Right cardiac atrium (tissue), 5 donors: ENCODE measurements at regions of chr10 and their contacts with region 1.

Region 1: DNA sequence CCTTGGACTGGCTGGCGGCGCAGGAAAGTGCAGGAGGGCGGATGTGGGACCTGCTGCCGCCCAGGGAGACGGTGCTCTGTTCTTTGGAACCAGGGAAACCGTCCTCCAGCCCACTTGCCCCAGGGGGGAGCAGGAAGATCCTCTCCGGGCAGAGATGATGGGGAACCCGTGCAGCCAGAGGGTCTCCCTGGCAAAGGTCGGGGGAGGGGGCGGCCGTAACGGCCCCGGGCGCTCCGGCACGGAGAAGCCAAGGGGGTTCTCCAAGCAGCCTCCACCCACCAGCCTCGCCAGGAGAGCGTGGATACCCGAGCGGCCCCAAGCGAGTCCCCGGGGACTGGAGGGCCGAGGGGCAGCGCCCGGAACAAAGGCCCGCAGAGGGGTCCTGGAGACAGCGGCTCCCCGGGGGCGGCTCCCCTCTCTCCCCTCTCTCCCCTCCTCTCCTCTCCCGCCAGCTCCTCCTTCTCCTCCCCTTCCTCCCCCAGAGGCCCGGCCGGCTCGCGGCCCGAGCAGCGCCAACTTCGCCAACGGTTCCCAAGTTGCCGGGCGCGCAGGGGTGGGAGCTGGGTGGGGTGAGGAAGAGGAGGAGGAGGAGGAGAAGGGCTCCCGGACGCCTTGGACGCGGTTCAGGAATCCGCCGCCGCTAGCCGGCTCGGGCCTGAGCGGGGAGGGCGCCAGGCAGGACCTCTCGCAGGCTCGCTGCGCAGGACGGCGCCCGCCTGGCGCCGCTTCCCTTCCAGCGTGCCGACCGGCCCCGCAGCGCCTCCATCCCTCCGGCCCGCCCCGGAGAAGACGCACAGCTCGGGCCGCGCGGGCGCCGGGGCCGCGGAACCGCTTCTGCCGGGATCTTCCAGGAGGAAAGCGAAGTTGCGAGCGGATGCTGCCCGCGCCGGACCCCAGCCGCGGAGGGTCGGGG is at the start of gene CHST3:
- DNase-seq: peak; percentile 90 to 95 (median 94)
- ATAC-seq: peak; percentile 82 to 89
- H3K4me3 ChIP-seq: peak within 1 kb of the TSS; percentile 78
- H3K27ac ChIP-seq: peak within 1 kb of the TSS; percentile 90
- H3K4me1 ChIP-seq: peaks cover 10% of the 10 kb centered on the region
- H3K27me3 ChIP-seq: no peaks in the 10 kb centered on the region
- total RNA-seq, gene CHST3: 19.8 to 37.0 (median 23.3) TPM

Region 2: GRCh38 chr10:72030762-72031543 is 66.9 kb after region 1 on chr10:
- intact Hi-C with region 1: loop called in 1 of 4 experiments (anchors 5 kb)
- DNase-seq: peak; percentile 80 to 92 (median 87)
- ATAC-seq: peak; percentile 92 to 95
- H3K4me3 ChIP-seq: no peak overlapping the region
- H3K27ac ChIP-seq: peak overlapping the region; percentile 87
- H3K4me1 ChIP-seq: peaks cover 10% of the 10 kb centered on the region
- H3K27me3 ChIP-seq: no peaks in the 10 kb centered on the region

Region 3: DNA sequence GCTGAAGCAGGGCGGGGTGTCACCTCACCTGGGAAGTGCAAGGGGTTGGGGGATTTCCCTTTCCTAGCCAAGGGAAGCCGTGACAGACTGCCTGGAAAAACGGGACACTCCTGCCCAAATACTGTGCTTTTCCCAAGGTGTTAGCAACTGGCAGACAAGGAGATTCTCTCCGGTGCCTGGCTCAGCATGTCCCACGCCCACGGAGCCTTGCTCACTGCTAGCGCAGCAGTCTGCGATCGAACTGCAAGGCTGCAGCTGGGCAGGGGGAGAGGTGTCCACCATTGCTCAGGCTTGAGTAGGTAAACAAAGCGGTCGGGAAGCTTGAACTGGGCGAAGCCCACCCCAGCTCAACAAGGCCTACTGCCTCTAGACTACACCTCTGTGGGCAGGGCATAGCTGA is 471.6 kb after region 1 on chr10:
- intact Hi-C with region 1: no loop called
- DNase-seq: no peak
- ATAC-seq: no peak
- H3K4me3 ChIP-seq: no peak overlapping the region
- H3K27ac ChIP-seq: no peak overlapping the region
- H3K4me1 ChIP-seq: no peaks in the 10 kb centered on the region
- H3K27me3 ChIP-seq: no peaks in the 10 kb centered on the region